Caco-2 (cell line): ENCODE measurements at regions of chr6 and their contacts with region 1.

Region 1: DNA sequence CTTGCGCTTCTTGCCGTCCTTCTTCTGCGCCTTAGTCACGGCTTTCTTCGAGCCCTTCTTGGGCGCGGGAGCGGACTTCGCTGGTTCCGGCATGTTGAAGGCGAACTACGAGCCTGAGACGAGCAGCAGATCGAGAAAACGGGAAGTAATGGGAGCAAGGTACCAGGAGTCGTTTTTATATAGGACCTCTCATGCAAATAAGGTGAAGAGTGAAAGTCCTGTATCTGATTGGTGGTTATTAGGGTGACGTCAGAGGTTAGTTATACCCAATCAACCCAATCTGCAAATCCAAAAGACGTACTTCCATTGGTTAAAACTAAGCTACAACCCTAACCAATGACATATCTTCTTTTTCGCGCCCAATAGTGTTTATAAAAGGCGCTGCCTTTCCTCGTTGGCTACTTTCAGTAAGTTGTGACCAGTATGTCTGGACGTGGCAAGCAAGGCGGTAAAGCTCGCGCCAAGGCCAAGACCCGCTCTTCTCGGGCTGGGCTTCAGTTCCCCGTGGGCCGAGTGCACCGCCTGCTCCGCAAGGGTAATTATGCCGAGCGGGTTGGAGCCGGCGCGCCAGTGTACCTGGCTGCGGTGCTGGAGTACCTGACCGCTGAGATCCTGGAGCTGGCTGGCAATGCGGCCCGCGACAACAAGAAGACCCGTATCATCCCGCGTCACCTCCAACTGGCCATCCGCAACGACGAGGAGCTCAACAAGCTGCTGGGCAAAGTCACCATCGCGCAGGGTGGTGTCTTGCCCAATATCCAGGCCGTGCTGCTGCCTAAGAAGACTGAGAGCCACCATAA is 100.6 kb upstream of the PRSS16 start:
- DNase-seq: peak; percentile 89 to 93
- H3K4me3 ChIP-seq: peak overlapping the region; percentile 69
- H3K4me3 Mint-ChIP-seq: no peak overlapping the region
- H3K27ac Mint-ChIP-seq: no peak overlapping the region
- H3K4me1 ChIP-seq: no peaks in the 10 kb centered on the region
- H3K4me1 Mint-ChIP-seq: peaks cover 8% of the 10 kb centered on the region
- H3K27me3 ChIP-seq: no peaks in the 10 kb centered on the region
- H3K27me3 Mint-ChIP-seq: no peaks in the 10 kb centered on the region
- CTCF ChIP-seq: no peak

Region 2: DNA sequence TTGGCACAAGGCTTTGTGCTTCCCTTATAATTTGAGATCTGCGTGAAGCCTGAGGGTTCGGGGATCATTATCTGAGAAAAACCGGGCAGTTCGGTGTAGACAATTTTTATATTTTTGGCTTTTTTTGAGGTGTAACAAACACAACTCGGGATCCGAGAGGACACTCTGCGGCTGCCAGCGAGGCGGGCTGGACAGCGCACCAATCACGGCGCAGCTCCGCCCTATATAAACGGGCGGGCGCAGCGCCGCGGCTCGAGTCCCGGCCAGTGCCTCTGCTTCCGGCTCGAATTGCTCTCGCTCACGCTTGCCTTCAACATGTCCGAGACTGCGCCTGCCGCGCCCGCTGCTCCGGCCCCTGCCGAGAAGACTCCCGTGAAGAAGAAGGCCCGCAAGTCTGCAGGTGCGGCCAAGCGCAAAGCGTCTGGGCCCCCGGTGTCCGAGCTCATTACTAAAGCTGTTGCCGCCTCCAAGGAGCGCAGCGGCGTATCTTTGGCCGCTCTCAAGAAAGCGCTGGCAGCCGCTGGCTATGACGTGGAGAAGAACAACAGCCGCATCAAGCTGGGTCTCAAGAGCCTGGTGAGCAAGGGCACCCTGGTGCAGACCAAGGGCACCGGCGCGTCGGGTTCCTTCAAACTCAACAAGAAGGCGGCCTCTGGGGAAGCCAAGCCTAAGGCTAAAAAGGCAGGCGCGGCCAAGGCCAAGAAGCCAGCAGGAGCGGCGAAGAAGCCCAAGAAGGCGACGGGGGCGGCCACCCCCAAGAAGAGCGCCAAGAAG is 990.6 kb before region 1 on chr6:
- CTCF ChIA-PET with region 1: no interaction called
- POLR2A ChIA-PET with region 1: no interaction called
- intact Hi-C with region 1: loop called (anchors 5 kb)
- DNase-seq: peak; percentile 86 to 93
- H3K4me3 ChIP-seq: peak overlapping the region; percentile 64
- H3K4me3 Mint-ChIP-seq: peak overlapping the region; percentile 86
- H3K27ac Mint-ChIP-seq: peak overlapping the region; percentile 98
- H3K4me1 ChIP-seq: peaks cover 10% of the 10 kb centered on the region
- H3K4me1 Mint-ChIP-seq: peaks cover 45% of the 10 kb centered on the region
- H3K27me3 ChIP-seq: no peaks in the 10 kb centered on the region
- H3K27me3 Mint-ChIP-seq: peaks cover 15% of the 10 kb centered on the region
- CTCF ChIP-seq: no peak

Region 3: DNA sequence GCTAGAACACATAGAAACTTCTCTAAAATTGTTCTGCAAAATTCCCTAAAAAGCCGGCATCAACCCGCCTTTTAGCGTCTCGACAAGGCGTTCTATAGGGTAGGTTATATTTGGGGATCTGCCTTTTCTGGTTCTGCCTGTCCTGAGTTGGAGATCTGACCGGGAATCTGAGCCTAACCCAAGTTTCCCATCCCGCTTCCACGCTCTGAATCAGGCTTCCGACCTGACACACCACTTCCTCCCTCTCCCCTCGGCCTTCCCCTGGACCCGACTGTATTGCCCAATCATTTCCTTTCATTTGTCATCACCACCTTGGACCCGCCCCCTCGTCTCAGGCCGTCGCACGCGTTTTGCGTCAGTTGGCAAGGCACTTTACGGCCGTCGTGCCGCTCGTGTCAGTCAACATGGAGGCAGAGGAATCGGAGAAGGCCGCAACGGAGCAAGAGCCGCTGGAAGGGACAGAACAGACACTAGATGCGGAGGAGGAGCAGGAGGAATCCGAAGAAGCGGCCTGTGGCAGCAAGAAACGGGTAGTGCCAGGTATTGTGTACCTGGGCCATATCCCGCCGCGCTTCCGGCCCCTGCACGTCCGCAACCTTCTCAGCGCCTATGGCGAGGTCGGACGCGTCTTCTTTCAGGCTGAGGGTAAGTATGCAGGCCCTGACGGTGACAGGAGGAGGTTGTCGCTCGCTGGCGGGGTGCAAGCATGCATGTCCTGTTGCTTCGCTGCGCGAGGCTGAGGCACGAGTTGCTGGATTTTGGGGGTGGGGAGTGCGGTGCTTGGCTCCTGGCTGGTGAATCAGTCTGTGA is 550.1 kb before region 1 on chr6 and contains the start of gene ABT1:
- CTCF ChIA-PET with region 1: no interaction called
- POLR2A ChIA-PET with region 1: interaction called, 22 read pairs
- intact Hi-C with region 1: no loop called
- DNase-seq: peak; percentile 97 to 98
- H3K4me3 ChIP-seq: peak within 1 kb of the TSS; percentile 91
- H3K4me3 Mint-ChIP-seq: no peak within 1 kb of the TSS
- H3K27ac Mint-ChIP-seq: no peak within 1 kb of the TSS
- H3K4me1 ChIP-seq: no peaks in the 10 kb centered on the region
- H3K4me1 Mint-ChIP-seq: no peaks in the 10 kb centered on the region
- H3K27me3 ChIP-seq: no peaks in the 10 kb centered on the region
- H3K27me3 Mint-ChIP-seq: peaks cover 3% of the 10 kb centered on the region
- CTCF ChIP-seq: no peak
- total RNA-seq, gene ABT1: 15.1 and 17.0 TPM in 2 replicates

Region 4: DNA sequence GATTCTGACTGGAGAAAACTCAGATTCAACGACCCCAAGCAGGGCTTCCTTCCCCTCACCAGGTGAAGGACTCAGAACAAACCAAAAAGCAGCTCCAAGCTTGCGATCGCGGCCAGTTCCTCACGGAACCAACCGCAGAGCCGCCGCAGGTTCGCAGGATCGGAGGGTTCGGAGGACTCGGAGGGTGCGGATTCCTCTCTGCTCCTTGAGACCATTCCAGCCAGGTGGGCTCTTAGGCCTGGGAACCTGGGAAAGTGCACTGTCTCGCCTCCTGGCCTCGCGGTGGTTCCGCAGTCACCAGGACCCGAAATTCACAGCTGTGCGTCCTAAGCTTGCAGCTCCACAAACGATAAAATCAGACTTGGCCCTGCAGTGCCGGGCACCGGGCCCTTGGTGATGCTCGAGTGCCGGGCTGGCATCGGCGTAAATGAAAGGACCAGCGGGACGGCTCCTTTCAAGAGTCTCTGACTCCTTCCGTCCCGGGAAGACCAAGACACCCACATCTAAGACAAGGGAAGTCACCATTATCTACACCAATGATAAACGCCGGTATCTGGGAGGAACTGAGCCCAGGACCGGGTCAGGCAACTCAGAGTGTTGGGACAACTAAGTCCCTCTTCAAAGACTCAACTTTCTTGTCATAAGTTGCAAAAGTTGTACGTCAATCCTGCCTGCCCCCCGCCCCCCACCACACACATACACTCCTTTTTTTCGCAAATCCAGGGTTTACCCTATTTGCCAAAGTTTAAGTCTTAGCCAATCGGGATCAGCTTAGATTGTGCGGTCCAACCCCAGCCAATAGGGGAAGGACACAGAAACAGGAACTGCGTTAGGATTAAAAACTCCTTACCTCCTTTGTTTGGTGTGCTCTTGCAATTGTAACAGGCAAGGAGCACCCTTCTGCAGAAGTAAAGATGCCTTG is 30.8 kb after region 1 on chr6:
- CTCF ChIA-PET with region 1: interaction called, 3 read pairs
- POLR2A ChIA-PET with region 1: interaction called, 11 read pairs
- intact Hi-C with region 1: no loop called
- DNase-seq: peak; percentile 85 to 86
- H3K4me3 ChIP-seq: peak overlapping the region; percentile 94
- H3K4me3 Mint-ChIP-seq: peak overlapping the region; percentile 90
- H3K27ac Mint-ChIP-seq: peak overlapping the region; percentile 91
- H3K4me1 ChIP-seq: no peaks in the 10 kb centered on the region
- H3K4me1 Mint-ChIP-seq: peaks cover 6% of the 10 kb centered on the region
- H3K27me3 ChIP-seq: no peaks in the 10 kb centered on the region
- H3K27me3 Mint-ChIP-seq: no peaks in the 10 kb centered on the region
- CTCF ChIP-seq: peak; percentile 32 to 66

Region 5: DNA sequence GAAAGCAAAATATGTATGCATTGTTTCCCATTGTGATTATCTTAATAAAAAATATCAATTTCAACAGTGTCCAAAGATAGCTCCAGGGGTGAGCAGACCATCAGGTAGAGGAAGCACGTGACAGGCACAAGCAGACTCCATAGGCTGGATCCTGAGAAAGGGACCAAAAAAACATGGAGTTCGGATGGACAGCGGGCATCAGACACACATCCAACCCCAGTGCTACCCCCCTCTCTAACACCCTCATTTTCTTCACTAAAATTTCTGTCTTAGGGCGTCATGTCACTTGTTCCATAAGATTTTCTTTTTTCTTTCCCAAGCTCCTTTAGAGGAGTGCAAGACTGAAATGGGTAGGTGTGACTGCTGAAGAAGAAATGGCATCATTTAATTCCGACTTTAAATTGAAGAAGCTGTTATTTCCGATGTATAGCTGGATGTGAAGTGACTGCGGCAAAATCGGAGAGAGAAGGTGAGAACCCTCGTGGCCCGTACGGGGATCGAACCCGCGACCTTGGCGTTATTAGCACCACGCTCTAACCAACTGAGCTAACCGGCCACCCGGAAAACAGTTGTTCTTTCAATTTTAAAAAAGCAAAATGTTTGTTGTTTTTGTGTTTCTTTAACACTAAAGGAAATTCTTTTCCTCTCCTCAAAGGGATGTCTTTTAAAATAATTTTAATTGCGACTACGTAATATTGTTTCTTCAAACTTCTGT is 90.3 kb after region 1 on chr6:
- CTCF ChIA-PET with region 1: no interaction called
- POLR2A ChIA-PET with region 1: no interaction called
- intact Hi-C with region 1: no loop called
- DNase-seq: peak in 1 of 2 experiments; percentile 36
- H3K4me3 ChIP-seq: no peak overlapping the region
- H3K4me3 Mint-ChIP-seq: peak overlapping the region; percentile 59
- H3K27ac Mint-ChIP-seq: peak overlapping the region; percentile 56
- H3K4me1 ChIP-seq: 0 out of 2 replicates have a peak, but pooled peaks cover 4% of the 10 kb centered on the region
- H3K4me1 Mint-ChIP-seq: peaks cover 9% of the 10 kb centered on the region
- H3K27me3 ChIP-seq: no peaks in the 10 kb centered on the region
- H3K27me3 Mint-ChIP-seq: no peaks in the 10 kb centered on the region
- CTCF ChIP-seq: no peak

Region 6: DNA sequence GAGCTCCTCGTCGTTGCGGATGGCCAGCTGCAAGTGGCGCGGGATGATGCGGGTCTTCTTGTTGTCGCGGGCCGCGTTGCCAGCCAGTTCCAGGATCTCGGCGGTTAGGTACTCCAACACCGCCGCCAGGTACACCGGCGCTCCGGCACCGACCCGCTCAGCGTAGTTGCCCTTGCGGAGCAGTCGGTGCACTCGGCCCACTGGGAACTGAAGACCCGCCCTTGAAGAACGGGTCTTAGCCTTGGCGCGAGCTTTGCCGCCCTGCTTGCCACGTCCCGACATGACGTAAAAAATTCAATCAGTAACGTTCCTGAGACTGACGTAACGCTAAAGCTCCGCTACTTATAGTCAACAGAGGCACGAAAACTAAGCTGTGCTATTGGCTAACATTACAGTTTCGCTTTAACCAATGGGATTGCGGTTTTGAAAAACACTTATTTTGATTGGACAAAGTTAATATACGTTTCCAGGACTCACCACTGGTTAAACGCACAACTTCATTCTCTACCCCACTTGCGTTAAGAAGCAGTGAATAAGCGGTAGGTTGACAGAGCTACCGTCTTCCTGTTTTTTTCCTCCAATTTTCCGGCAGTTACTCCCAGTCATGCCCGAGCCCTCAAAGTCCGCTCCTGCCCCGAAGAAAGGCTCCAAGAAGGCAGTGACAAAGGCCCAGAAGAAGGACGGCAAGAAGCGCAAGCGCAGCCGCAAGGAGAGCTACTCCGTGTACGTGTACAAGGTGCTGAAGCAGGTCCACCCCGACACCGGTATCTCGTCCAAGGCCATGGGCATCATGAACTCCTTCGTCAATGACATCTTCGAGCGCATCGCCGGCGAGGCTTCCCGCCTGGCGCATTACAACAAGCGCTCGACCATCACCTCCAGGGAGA is 691.4 kb after region 1 on chr6:
- CTCF ChIA-PET with region 1: no interaction called
- POLR2A ChIA-PET with region 1: interaction called, 11 read pairs
- intact Hi-C with region 1: no loop called
- DNase-seq: peak; percentile 91 to 92
- H3K4me3 ChIP-seq: peak overlapping the region; percentile 77
- H3K4me3 Mint-ChIP-seq: no peak overlapping the region
- H3K27ac Mint-ChIP-seq: no peak overlapping the region
- H3K4me1 ChIP-seq: peaks cover 14% of the 10 kb centered on the region; the same call in 1 of the 2 replicates
- H3K4me1 Mint-ChIP-seq: peaks cover 21% of the 10 kb centered on the region
- H3K27me3 ChIP-seq: no peaks in the 10 kb centered on the region
- H3K27me3 Mint-ChIP-seq: no peaks in the 10 kb centered on the region
- CTCF ChIP-seq: no peak